Gastrocnemius medialis (tissue), 4 donors: ENCODE measurements at regions of chr4 and their contacts with region 1.

Region 1: GRCh38 chr4:112231779-112232713 is at the start of gene AP1AR:
- DNase-seq: peak; percentile 60 to 76
- ATAC-seq: peak; percentile 76 to 78
- H3K4me3 ChIP-seq: peak within 1 kb of the TSS; percentile 96 to 100 (median 99)
- H3K27ac ChIP-seq: peak within 1 kb of the TSS; percentile 98 to 100 (median 99)
- H3K4me1 ChIP-seq: peaks cover 34 to 42% of the 10 kb centered on the region in 2 donors
- H3K27me3 ChIP-seq: no peaks in the 10 kb centered on the region
- CTCF ChIP-seq: peak in 3 of 5 experiments; percentile 17 to 56 (median 22)
- POLR2A ChIP-seq: peak; percentile 88 to 92
- total RNA-seq, gene AP1AR: 8.9 to 21.5 (median 15.2) TPM

Region 2: DNA sequence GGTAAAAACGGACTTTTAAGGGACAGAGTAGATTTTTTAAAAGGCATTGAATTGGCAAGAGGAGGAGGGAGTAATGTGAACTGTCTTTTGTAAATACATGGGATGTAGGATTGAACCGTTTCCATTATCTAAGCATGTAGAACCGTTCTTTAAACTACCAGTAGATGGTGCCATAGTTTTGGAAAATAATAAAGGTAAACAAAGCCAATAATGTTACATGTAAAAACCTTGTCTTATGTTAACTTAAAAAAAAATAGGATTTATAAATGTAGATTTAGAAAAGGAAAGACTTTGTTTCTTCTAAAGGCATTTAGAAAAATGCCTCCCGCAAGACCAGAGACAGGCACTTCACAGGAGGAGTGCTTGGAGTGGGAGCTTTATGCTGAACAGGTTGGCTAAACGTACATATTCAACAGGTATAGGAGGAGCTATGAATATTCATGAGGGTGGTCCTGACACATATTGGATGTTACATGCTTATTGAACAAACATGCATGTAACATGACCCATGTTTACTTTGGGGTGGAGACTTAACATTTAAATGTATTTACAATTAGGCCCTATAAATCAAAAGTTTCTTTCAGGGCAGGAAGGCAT is 132.2 kb before region 1 on chr4:
- in situ Hi-C with region 1: loop called (anchors 5 to 10 kb)
- intact Hi-C with region 1: loop called (anchors 1 kb)
- DNase-seq: no peak
- ATAC-seq: peak; percentile 80
- H3K4me3 ChIP-seq: no peak overlapping the region
- H3K27ac ChIP-seq: no peak overlapping the region
- H3K4me1 ChIP-seq: no peaks in the 10 kb centered on the region
- H3K27me3 ChIP-seq: no peaks in the 10 kb centered on the region
- CTCF ChIP-seq: peak; percentile 38 to 69 (median 55)
- POLR2A ChIP-seq: no peak

Region 3: DNA sequence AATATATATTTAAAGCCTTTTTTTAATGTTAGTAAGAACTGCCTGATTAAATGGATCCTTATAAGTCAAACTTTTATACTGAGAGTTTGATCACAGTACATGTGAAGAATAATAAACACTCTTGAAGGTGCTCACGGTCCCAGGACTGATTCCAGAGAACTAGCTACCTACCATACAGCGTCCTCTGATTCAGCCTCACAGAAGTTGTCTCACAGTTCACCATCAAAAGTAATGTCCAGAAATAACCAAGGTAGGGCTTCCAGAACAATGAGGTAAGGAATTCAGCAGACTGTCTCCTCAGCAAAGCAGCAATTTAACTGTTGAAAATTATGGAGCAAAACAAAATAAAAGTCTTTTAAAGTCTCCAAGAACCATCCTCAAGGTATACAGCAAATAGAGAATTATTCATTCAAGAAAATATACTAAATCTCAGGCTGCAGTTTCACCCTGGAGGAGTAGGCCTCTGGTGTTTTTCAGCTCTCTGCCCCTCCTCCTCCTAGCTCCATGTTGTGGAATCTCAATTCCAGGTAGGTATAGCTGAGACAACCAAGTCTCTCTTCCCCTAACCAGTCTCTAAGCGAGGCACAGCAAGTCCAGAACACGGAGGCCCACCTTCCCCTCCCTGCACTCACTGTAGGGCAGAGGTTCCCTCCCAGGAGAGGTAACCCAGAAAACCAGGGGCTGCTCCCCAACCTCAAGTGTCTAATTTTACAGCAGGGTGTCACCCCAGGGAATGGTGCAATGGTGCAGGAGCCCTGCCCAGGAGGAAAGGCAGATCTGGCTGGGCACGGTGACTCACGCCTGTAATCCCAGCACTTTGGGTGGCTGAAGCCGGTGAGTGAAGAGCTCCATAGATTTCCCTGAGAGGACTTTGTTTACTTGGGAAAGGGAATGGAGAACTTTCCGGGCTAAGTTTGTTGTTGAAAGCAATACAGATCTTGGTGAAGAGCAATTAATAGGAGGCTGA is 58.2 kb before region 1 on chr4:
- in situ Hi-C with region 1: no loop called
- intact Hi-C with region 1: loop called (anchors 2 kb)
- DNase-seq: peak in 1 of 2 donors; percentile 69
- ATAC-seq: peak; percentile 61 to 78
- H3K4me3 ChIP-seq: no peak overlapping the region
- H3K27ac ChIP-seq: peak overlapping the region; percentile 14 to 62 (median 44)
- H3K4me1 ChIP-seq: peaks cover 8 to 21% of the 10 kb centered on the region in 2 donors
- H3K27me3 ChIP-seq: no peaks in the 10 kb centered on the region
- CTCF ChIP-seq: no peak
- POLR2A ChIP-seq: no peak

Region 4: DNA sequence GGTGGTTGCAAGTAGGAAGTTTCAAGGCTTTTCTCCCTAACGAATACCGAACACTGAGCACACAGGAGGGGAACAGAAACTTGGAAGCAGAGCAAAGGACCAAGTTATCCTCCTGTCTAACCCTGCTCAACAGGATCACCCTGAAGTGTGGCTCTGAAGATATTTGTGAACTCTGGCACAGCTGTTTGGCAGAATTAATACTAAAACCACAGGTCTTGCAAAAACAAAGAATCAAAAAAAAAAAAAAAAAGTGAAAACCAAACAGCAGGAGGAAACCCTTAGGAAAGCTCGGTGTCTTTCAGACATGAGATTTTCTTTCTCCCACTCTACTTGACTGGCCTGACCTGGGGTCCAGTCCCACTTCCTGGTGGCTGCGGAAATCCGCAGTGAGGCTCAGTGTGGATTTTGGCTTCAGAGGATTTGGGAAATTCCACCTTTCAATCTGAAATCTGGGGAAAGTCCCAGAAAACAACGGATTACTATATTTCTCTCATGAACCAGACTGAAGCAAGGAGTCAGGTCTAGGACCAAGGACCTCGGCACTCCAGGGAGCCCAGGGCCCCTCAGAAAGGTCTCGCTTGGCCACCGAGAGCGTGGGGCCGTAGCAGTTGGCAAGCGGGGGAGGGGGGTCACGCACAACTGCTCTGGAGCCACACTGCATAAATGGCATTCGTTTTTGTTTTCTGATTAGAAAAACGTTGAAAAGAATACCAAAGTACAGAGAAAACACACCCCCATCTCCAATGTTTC is 52.8 kb after region 1 on chr4:
- in situ Hi-C with region 1: no loop called
- intact Hi-C with region 1: loop called (anchors 5 kb)
- DNase-seq: no peak
- ATAC-seq: peak; percentile 39 to 52
- H3K4me3 ChIP-seq: peak overlapping the region; percentile 56 to 89 (median 77)
- H3K27ac ChIP-seq: peak overlapping the region; percentile 63 to 79 (median 74)
- H3K4me1 ChIP-seq: peaks cover 17 to 21% of the 10 kb centered on the region in 2 donors
- H3K27me3 ChIP-seq: no peaks in the 10 kb centered on the region
- CTCF ChIP-seq: no peak
- POLR2A ChIP-seq: no peak

Region 5: DNA sequence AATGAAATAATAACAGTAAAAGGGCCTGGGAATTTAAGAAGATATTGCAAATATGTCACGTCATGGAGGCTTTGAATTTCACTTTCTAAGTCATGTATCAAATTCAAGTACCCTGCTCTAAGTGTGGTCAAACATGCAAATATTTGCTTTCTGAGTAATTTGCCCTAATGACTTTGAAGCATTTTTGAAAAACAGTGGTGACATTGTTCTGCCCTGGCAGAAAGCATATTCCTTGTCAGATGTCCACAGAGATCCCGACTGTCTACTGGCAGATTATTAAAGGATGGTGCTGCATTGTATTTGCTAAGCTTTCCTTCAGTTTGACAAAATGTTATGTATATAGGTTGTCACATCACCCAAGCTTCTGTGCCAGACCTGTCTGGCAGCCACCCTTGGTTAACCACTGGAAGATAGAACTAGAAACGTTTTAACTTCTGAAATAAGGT is 909.9 kb after region 1 on chr4:
- in situ Hi-C with region 1: no loop called
- intact Hi-C with region 1: loop called (anchors 10 kb)
- DNase-seq: no peak
- ATAC-seq: no peak
- H3K4me3 ChIP-seq: peak overlapping the region in 1 of 4 donors; percentile 13
- H3K27ac ChIP-seq: peak overlapping the region in 2 of 4 donors; percentile 18 to 26
- H3K4me1 ChIP-seq: peaks cover 9 to 20% of the 10 kb centered on the region in 2 donors
- H3K27me3 ChIP-seq: no peaks in the 10 kb centered on the region
- CTCF ChIP-seq: no peak
- POLR2A ChIP-seq: no peak